ENCODE measurements at regions of chr18 and their contacts with region 1.

Region 1: GRCh38 chr18:62131301-62131909 is 55.5 kb downstream of the PIGN start:
- DNase-seq: peak; percentile 35
- ATAC-seq: peak; percentile 71
- H3K4me3 ChIP-seq: no peak overlapping the region
- H3K27ac ChIP-seq: no peak overlapping the region
- H3K4me1 ChIP-seq: no peaks in the 10 kb centered on the region
- H3K27me3 ChIP-seq: no peaks in the 10 kb centered on the region
- CTCF ChIP-seq: peak; percentile 77 to 96 (median 88)
- POLR2A ChIP-seq: no peak
- RAD21 ChIP-seq: peak; percentile 87

Region 2: DNA sequence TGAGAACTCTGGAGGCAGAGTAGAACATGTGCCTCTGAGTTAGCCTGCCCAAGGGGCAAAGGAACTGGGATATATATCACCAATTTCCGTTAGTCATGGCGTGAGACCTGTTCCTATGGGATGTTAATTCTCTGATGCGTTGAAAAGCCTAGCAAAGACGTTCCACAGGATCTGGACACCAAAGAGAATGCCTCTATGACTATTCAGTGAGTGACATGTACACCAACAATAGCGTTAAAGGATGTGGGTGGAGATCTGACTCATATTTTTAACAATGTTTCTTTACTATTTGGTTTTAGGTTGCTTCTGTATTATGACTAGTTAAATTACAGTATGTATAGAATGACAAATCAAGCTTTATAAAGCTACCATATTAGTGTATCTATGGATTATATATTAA is 1438.0 kb before region 1 on chr18:
- CTCF ChIA-PET with region 1: no interaction called
- POLR2A ChIA-PET with region 1: no interaction called
- RAD21 ChIA-PET with region 1: no interaction called
- intact Hi-C with region 1: loop called (anchors 10 kb)
- DNase-seq: no peak
- ATAC-seq: no peak
- H3K4me3 ChIP-seq: no peak overlapping the region
- H3K27ac ChIP-seq: no peak overlapping the region
- H3K4me1 ChIP-seq: no peaks in the 10 kb centered on the region
- H3K27me3 ChIP-seq: peaks cover 5% of the 10 kb centered on the region; the same call in 1 of the 2 replicates
- CTCF ChIP-seq: no peak
- POLR2A ChIP-seq: no peak
- RAD21 ChIP-seq: no peak

Region 3: DNA sequence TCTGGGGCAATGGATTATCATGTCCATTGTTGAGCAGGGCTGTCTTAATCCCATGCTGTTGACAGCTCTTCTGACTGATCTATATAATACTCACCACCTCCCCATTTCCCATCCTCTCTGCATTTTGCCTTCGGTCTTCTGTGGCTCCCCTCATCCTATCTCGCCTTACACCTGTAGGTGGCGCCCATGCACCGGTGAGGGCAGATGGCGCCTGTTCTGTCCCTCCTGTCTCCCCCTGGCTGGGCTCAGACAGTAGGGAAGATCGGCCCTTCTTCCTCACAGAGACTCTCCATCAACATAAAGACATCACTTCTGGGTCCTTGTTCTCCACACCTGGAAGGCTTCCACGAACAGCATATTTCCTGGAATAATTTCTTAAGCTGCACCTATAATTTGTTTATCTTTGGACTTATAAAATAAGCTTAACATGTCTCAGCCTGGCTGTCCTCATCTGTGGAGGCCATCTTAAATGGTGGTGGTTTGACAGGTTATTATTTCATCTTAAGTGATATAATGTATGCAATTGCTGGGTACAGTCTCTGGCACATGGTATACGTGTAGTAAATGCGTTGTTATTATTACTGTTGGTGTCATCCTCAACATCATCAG is 809.0 kb before region 1 on chr18:
- CTCF ChIA-PET with region 1: interaction called, 11 read pairs
- POLR2A ChIA-PET with region 1: no interaction called
- RAD21 ChIA-PET with region 1: no interaction called
- intact Hi-C with region 1: loop called (anchors 1 kb)
- DNase-seq: peak; percentile 27
- ATAC-seq: peak; percentile 99
- H3K4me3 ChIP-seq: no peak overlapping the region
- H3K27ac ChIP-seq: no peak overlapping the region
- H3K4me1 ChIP-seq: no peaks in the 10 kb centered on the region
- H3K27me3 ChIP-seq: no peaks in the 10 kb centered on the region
- CTCF ChIP-seq: peak; percentile 79 to 90 (median 87); a peak in 5 of 6 replicates
- POLR2A ChIP-seq: no peak
- RAD21 ChIP-seq: peak; percentile 79

Region 4: GRCh38 chr18:61551586-61551985 is 579.8 kb before region 1 on chr18:
- CTCF ChIA-PET with region 1: interaction called, 3 read pairs
- POLR2A ChIA-PET with region 1: no interaction called
- RAD21 ChIA-PET with region 1: interaction called in 1 of 2 experiments, 3 read pairs
- intact Hi-C with region 1: loop called (anchors 1 kb)
- DNase-seq: peak; percentile 79
- ATAC-seq: peak; percentile 87
- H3K4me3 ChIP-seq: no peak overlapping the region
- H3K27ac ChIP-seq: no peak overlapping the region
- H3K4me1 ChIP-seq: peaks cover 0 to 3% of the 10 kb centered on the region in 2 experiments; a peak in 2 of 4 replicates
- H3K27me3 ChIP-seq: no peaks in the 10 kb centered on the region
- CTCF ChIP-seq: peak; percentile 53 to 85 (median 79); a peak in 5 of 6 replicates
- POLR2A ChIP-seq: no peak
- RAD21 ChIP-seq: peak; percentile 73

Region 5: DNA sequence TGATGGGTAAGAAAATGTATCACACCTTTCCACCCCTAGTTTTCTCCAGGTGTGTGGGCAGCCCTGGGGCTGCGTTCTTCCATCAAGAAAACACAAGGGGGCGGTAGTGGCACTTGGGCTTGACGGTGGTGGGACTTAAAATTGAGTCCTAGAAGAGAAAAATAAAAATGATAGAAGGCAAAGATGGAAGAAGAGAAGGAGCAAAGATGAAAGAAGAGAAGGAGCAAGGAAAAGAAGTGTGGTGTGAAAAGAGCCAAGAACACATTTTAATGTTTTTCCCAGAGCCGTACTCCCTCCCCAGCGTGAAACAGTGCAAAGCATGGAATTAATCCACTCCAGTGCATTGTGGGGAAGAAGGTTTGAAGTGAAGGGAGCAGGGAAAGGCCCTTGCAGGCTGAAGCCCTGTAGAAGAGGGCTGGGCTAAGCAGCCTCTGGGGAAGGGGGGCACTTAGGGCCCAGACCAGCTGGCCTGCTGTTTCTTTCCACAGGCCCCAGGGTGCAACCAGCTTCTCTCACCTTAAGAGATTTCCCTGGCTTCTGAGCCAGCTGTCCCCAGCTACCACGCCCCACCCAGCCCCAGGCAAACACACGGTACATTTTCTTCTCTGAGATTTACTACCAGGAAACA is 495.4 kb before region 1 on chr18:
- CTCF ChIA-PET with region 1: interaction called, 11 read pairs
- POLR2A ChIA-PET with region 1: no interaction called
- RAD21 ChIA-PET with region 1: no interaction called
- intact Hi-C with region 1: loop called (anchors 1 kb)
- DNase-seq: peak; percentile 29
- ATAC-seq: peak; percentile 90
- H3K4me3 ChIP-seq: no peak overlapping the region
- H3K27ac ChIP-seq: no peak overlapping the region
- H3K4me1 ChIP-seq: peaks cover 3 to 4% of the 10 kb centered on the region in 2 experiments; a peak in 1 of 4 replicates
- H3K27me3 ChIP-seq: no peaks in the 10 kb centered on the region
- CTCF ChIP-seq: peak; percentile 56 to 94 (median 87); a peak in 5 of 6 replicates
- POLR2A ChIP-seq: no peak
- RAD21 ChIP-seq: peak; percentile 69

Region 6: DNA sequence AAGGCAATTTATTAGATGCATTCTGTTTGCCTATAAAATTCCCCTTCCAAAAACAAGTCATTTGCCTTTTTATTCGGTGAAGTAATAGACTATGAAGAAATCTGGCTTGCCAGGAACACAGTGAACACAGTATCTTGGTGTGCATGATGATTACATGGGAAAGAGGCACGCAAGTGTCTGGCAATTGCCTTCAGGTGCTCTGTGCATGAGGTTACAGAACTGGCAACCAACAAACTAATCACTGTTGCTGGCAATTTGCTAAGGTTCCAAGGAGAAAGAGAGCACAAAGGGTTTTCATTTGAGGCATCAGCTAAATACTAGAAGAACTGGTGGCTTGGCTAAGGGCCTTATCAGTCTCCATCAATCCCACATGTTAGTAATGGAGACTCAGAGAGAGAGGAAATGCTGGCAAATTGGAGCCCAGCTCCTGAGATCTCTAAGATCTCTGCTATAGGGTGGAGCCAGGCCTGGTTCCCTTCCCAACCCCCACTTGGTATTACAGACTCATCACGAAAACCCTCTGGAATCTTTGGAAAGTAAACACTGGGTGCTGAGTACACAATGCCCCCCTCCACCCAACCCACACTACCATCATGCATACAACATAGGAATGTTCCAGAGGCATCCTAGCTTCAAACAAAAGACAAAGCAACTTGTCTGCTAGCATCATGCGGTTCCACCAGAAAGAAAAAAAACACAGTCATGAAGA is 249.0 kb before region 1 on chr18:
- CTCF ChIA-PET with region 1: no interaction called
- POLR2A ChIA-PET with region 1: no interaction called
- RAD21 ChIA-PET with region 1: no interaction called
- intact Hi-C with region 1: no loop called
- DNase-seq: no peak
- ATAC-seq: no peak
- H3K4me3 ChIP-seq: no peak overlapping the region
- H3K27ac ChIP-seq: no peak overlapping the region
- H3K4me1 ChIP-seq: no peaks in the 10 kb centered on the region
- H3K27me3 ChIP-seq: no peaks in the 10 kb centered on the region
- CTCF ChIP-seq: no peak
- POLR2A ChIP-seq: no peak
- RAD21 ChIP-seq: no peak

Region 7: DNA sequence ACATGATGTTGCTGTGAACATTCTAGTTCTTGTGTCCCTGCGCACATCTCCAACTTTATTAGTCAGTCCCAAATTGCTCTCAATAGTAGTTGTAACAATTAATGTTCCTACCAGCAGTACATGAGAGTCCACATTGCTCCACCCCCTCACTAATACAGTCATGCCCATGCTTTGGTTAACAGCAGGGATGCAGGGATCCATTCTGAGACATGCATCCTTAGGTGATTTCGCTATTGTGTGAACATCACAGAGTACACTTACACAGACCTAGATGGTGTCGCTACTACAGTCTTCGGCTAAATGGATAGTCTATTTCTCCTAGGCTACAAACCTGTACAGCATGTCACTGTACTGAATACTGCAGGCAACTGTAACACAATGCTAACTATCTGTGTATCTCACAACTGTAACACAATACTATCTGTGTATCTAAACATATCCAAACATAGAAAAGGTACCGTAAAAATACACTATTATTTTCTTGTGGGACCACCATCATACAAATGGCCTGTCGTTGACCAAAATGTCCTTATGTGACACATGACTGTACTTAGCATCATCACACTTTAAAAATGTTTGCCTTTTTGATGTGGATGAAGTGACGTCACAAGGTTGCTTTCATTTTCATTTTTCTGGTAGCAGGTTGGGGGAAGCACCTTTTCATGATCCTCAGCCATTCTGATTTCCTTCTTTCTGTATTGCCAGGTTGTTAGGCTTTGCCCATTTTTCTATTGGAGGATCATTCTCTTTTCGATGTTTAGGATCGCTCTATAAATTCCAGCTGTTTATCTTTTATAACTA is 155.7 kb before region 1 on chr18:
- CTCF ChIA-PET with region 1: no interaction called
- POLR2A ChIA-PET with region 1: no interaction called
- RAD21 ChIA-PET with region 1: no interaction called
- intact Hi-C with region 1: no loop called
- DNase-seq: no peak
- ATAC-seq: no peak
- H3K4me3 ChIP-seq: no peak overlapping the region
- H3K27ac ChIP-seq: no peak overlapping the region
- H3K4me1 ChIP-seq: no peaks in the 10 kb centered on the region
- H3K27me3 ChIP-seq: no peaks in the 10 kb centered on the region
- CTCF ChIP-seq: no peak
- POLR2A ChIP-seq: no peak
- RAD21 ChIP-seq: no peak

Measured in HCT116 (cell line).